ENCODE measurements at regions of chr7 and their contacts with region 1.

Region 1: DNA sequence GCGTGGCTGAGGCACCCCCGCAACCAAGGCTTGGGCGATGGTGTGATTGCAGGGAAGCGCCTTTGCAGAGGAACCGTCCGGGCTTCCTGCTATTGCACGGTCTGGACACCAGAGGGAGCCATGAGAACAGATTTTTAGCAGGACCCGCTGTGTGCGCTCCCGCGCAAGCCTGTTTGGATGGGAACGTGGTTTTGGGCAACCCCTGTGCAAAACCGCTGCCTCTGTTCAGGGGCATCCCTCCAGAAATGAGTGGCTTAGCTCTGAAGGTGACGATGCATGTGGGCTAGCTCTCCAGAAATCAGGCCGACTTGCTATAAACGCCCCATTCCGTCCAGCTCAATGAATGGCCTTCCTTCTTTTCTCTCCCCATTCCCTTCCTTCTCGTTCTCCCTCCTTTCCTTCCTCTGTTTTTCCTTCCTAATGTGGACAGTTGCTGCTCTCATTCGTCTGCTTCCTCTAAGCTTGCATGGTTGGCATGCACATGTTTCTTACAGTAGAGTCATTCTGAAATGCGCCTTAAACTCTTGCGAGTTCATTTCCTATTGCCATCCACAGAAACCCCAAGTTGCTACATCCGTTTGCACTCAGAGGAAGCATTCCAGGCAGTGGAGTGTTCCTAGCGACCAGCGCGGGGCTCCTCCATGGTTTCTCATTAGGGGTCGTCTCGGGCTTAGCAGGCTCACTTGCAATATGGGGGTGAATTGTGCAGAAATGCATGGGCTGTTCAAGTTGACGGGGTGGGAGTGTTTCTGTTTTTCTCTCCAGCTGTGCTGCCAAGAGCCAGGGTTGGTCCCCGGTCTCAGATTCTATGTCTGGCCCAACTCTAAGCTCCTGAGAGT is 302.5 kb upstream of the GALNT17 start:
- DNase-seq: no peak
- H3K4me3 ChIP-seq: peak overlapping the region; percentile 49
- CTCF ChIP-seq: peak; percentile 81

Region 2: DNA sequence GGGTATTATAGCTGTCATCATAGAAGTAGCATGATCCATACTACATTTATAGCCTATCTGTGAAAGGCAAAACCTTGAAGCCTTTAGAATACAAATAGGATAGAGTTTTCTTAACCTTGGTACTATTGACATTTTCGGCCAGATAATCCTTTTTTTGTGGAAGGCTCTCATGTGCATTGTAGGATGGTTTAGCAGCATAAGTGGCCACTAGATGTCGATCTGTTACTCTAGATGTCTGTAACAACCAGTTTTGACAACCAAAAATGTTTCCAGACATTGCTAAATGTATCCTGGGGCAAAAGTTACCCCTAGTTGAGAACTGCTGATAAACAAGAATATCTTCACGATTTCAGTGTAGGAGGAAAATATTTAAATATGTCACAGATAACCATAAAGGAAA is 16.9 kb before region 1 on chr7:
- CTCF ChIA-PET with region 1: interaction called, 13 read pairs
- POLR2A ChIA-PET with region 1: no interaction called
- DNase-seq: no peak
- H3K4me3 ChIP-seq: no peak overlapping the region
- CTCF ChIP-seq: peak; percentile 24

Region 3: DNA sequence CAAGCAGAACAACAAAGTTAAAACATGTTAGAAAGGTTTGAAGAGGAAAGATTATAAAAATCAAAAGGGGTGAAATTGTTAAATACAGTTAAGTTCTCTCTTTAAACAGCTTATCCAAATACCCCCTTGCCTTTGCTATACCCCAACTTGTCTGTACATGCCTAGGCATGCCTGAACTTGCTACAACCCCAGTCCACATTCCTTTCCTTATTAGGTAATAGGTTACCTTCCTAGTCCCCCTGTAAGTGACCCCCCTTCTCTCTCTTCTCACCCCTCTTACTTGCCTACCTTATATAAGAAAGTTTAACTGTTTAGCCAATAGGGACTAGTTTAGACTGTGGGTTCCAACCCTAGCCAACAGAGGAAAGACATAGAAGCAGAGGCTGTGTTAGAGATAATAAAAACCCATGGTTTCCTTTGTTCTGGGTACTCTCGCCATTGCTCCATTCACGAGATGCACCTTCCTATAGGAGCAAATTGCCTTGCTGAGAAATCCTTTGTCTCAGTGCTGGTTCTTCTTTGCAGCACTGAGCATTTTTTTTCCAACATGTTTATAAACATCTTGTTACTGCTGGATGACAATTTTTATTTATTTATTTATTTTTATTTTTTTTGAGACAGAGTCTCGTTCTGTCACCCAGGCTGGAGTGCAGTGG is 20.3 kb after region 1 on chr7:
- CTCF ChIA-PET with region 1: interaction called, 18 read pairs
- POLR2A ChIA-PET with region 1: interaction called, 3 read pairs
- DNase-seq: no peak
- H3K4me3 ChIP-seq: no peak overlapping the region
- CTCF ChIP-seq: no peak

Region 4: GRCh38 chr7:70856866-70857630 is 27.6 kb after region 1 on chr7:
- CTCF ChIA-PET with region 1: interaction called, 11 read pairs
- POLR2A ChIA-PET with region 1: no interaction called
- DNase-seq: peak; percentile 5
- H3K4me3 ChIP-seq: no peak overlapping the region
- CTCF ChIP-seq: peak; percentile 78

Region 5: GRCh38 chr7:71733107-71733870 is 903.8 kb after region 1 on chr7:
- CTCF ChIA-PET with region 1: interaction called, 88 read pairs
- POLR2A ChIA-PET with region 1: no interaction called
- DNase-seq: no peak
- H3K4me3 ChIP-seq: no peak overlapping the region
- CTCF ChIP-seq: peak; percentile 90

Measured in AG04449 (cell line).